Activated CD4-positive, alpha-beta T cell treated with anti-CD3 and anti-CD28 coated beads for 36 hours (primary cell): ENCODE measurements at regions of chr11 and their contacts with region 1.

Region 1: DNA sequence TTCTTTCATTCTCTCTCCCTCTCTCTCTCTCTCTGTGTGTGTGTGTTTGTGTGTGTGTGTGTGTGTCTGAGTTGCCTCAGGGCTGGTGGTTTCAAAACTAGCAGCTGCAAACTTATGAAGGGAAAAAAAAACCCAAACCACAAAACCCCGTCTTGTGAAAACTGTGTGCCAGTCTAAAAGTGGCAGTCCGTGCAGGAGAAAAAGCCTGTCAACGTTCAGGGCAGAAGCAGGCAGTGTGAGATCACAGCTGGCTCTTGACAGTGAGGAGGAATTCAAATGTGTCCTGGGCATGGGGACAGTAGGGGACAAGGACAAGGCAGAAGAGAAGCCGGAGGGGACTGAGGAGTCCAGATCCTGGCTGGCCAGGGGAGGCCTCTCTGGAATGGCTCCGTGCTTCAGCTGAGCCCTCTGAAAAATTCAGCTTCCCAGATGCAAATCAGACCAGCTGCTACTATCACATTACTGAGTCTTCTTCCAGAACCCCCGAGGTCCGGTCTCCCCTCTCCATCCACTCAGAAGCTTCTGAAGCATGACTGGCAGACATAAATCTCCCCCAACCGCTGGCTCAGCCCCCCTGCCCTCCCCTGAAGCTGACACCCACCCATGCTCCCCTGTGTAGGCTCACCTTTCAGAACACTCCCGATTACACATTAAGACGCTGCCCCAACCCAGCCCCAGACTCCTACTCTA is 31.9 kb downstream of the FLI1 start:
- DNase-seq: peak; percentile 65
- ATAC-seq: peak; percentile 53
- H3K4me3 Mint-ChIP-seq: peak overlapping the region; percentile 66
- H3K27ac Mint-ChIP-seq: peak overlapping the region; percentile 87
- H3K4me1 Mint-ChIP-seq: peaks cover 98% of the 10 kb centered on the region
- H3K27me3 Mint-ChIP-seq: no peaks in the 10 kb centered on the region

Region 2: GRCh38 chr11:128279866-128280265 is 445.9 kb before region 1 on chr11:
- CTCF ChIA-PET with region 1: no interaction called
- POLR2A ChIA-PET with region 1: no interaction called
- intact Hi-C with region 1: loop called in 1 of 2 experiments (anchors 10 kb)
- DNase-seq: no peak
- ATAC-seq: no peak
- H3K4me3 Mint-ChIP-seq: no peak overlapping the region
- H3K27ac Mint-ChIP-seq: no peak overlapping the region
- H3K4me1 Mint-ChIP-seq: peaks cover 20% of the 10 kb centered on the region
- H3K27me3 Mint-ChIP-seq: no peaks in the 10 kb centered on the region

Region 3: GRCh38 chr11:128568166-128568778 is 157.5 kb before region 1 on chr11:
- CTCF ChIA-PET with region 1: no interaction called
- POLR2A ChIA-PET with region 1: no interaction called
- intact Hi-C with region 1: no loop called
- DNase-seq: peak; percentile 59
- ATAC-seq: peak; percentile 87
- H3K4me3 Mint-ChIP-seq: no peak overlapping the region
- H3K27ac Mint-ChIP-seq: no peak overlapping the region
- H3K4me1 Mint-ChIP-seq: peaks cover 14% of the 10 kb centered on the region
- H3K27me3 Mint-ChIP-seq: no peaks in the 10 kb centered on the region

Region 4: GRCh38 chr11:128603752-128604414 is 121.9 kb before region 1 on chr11:
- CTCF ChIA-PET with region 1: no interaction called
- POLR2A ChIA-PET with region 1: no interaction called
- intact Hi-C with region 1: no loop called
- DNase-seq: no peak
- ATAC-seq: no peak
- H3K4me3 Mint-ChIP-seq: no peak overlapping the region
- H3K27ac Mint-ChIP-seq: peak overlapping the region; percentile 7
- H3K4me1 Mint-ChIP-seq: peaks cover 55% of the 10 kb centered on the region
- H3K27me3 Mint-ChIP-seq: no peaks in the 10 kb centered on the region

Region 5: DNA sequence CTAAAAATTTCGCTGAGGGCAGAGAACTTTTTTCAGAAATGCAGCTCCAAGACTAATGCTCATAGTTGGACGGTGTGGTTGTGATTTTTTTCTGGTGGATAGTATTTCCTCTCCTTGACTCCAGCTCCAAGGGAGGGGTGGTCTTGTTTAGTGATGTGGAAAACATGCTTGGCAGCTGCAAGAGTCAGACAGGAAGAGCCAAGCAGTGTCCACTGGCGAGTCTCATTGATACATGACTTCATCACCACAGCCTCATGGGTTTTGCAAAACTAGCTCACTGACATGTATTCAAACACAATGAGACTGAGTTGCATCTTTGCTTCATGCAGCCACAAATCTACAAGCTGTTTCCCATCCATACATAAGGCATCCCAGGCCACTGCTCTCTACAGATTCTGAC is 148.7 kb after region 1 on chr11:
- CTCF ChIA-PET with region 1: no interaction called
- POLR2A ChIA-PET with region 1: no interaction called
- intact Hi-C with region 1: no loop called
- DNase-seq: no peak
- ATAC-seq: no peak
- H3K4me3 Mint-ChIP-seq: no peak overlapping the region
- H3K27ac Mint-ChIP-seq: no peak overlapping the region
- H3K4me1 Mint-ChIP-seq: no peaks in the 10 kb centered on the region
- H3K27me3 Mint-ChIP-seq: no peaks in the 10 kb centered on the region